Mammary epithelial cell (primary cell): ENCODE measurements at regions of chr1 and their contacts with region 1.

Region 1: DNA sequence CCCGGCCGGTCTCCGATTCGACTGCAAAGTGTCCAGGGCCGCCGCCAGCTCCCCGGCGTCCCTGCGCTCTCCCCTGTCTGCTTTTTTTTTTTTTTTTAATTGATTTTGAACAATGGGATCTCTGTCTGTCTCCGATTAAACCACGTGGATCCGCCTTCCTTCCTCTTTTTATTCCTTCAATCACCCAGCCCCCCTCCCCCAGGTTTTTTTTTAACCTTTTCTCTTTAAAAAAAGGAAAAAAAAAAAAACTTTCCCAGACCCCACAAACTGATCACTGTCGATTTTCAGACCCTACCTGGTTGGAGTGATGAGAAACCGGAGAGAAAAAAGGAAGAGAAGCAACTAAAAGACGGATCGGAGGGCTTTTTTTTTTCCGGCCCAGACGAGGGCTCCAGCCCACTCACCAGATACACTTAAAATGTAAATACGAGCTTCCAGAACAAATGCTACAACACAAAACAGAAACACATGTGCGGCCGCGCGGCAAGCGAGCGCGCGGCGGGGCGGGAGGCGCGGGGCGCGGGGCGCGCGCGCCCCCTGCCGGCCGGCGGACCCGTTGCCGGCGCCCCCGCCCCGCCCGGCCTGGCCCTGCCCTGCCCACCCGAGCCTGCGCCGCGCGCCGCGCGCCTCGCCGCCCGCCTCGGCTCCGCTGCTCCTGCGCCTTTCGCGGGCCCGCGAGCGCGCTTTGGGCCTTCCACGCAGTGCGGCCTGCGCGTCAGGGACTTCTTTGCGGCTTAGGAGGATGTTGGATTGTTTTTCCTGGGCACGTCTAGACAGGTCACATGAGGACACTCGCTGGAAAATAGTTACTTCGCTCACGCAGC is at the start of gene RCC2:
- DNase-seq: peak; percentile 72
- H3K4me3 ChIP-seq: peak within 1 kb of the TSS; percentile 76 to 99 (median 86)
- H3K27ac ChIP-seq: peak within 1 kb of the TSS; percentile 95
- H3K4me1 ChIP-seq: peaks cover 56% of the 10 kb centered on the region
- H3K27me3 ChIP-seq: no peaks in the 10 kb centered on the region
- CTCF ChIP-seq: no peak
- total RNA-seq, gene RCC2: 97.9 to 113 TPM

Region 2: GRCh38 chr1:17427696-17428660 is 11.5 kb before region 1 on chr1:
- CTCF ChIA-PET with region 1: no interaction called
- dilution Hi-C with region 1: no loop called
- in situ Hi-C with region 1: no loop called
- intact Hi-C with region 1: loop called (anchors 1 kb)
- DNase-seq: no peak
- H3K4me3 ChIP-seq: no peak overlapping the region
- H3K27ac ChIP-seq: no peak overlapping the region
- H3K4me1 ChIP-seq: no peaks in the 10 kb centered on the region
- H3K27me3 ChIP-seq: no peaks in the 10 kb centered on the region
- CTCF ChIP-seq: no peak

Region 3: GRCh38 chr1:17460245-17460644 is 20.8 kb after region 1 on chr1:
- CTCF ChIA-PET with region 1: interaction called, 4 read pairs
- dilution Hi-C with region 1: no loop called
- in situ Hi-C with region 1: no loop called
- intact Hi-C with region 1: loop called (anchors 1 kb)
- DNase-seq: peak; percentile 98
- H3K4me3 ChIP-seq: peak overlapping the region in 2 of 3 experiments; percentile 28
- H3K27ac ChIP-seq: peak overlapping the region; percentile 86
- H3K4me1 ChIP-seq: peaks cover 5% of the 10 kb centered on the region
- H3K27me3 ChIP-seq: no peaks in the 10 kb centered on the region
- CTCF ChIP-seq: peak in 1 of 2 donors; percentile 2

Region 4: GRCh38 chr1:17475729-17476128 is 36.3 kb after region 1 on chr1:
- CTCF ChIA-PET with region 1: interaction called, 4 read pairs
- dilution Hi-C with region 1: no loop called
- in situ Hi-C with region 1: loop called in 1 of 2 experiments (anchors 5 kb)
- intact Hi-C with region 1: loop called (anchors 1 kb)
- DNase-seq: peak; percentile 92
- H3K4me3 ChIP-seq: no peak overlapping the region
- H3K27ac ChIP-seq: no peak overlapping the region
- H3K4me1 ChIP-seq: peaks cover 8% of the 10 kb centered on the region
- H3K27me3 ChIP-seq: no peaks in the 10 kb centered on the region
- CTCF ChIP-seq: no peak

Region 5: DNA sequence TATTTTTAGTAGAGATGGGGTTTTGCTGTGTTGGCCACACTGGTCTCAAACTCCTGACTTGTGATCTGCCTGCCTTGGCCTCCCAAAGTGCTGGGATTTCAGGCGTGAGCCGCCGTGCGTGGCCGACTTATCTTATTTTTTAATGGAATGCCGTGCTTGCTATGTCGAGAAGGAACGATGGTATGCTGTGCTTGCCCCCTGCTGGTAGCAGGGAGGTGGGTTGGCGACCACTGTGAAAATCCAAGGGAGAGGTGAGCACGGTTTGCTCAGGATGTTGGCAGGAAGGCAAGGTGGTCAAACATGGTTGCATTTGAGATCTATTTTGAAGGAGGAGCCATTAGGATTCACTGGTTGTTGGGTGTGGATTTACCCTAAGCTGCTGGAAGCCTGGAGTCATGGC is 45.8 kb after region 1 on chr1:
- CTCF ChIA-PET with region 1: no interaction called
- dilution Hi-C with region 1: no loop called
- in situ Hi-C with region 1: no loop called
- intact Hi-C with region 1: loop called (anchors 2 kb)
- DNase-seq: no peak
- H3K4me3 ChIP-seq: no peak overlapping the region
- H3K27ac ChIP-seq: no peak overlapping the region
- H3K4me1 ChIP-seq: peaks cover 7% of the 10 kb centered on the region
- H3K27me3 ChIP-seq: no peaks in the 10 kb centered on the region
- CTCF ChIP-seq: peak; percentile 40 to 53

Region 6: DNA sequence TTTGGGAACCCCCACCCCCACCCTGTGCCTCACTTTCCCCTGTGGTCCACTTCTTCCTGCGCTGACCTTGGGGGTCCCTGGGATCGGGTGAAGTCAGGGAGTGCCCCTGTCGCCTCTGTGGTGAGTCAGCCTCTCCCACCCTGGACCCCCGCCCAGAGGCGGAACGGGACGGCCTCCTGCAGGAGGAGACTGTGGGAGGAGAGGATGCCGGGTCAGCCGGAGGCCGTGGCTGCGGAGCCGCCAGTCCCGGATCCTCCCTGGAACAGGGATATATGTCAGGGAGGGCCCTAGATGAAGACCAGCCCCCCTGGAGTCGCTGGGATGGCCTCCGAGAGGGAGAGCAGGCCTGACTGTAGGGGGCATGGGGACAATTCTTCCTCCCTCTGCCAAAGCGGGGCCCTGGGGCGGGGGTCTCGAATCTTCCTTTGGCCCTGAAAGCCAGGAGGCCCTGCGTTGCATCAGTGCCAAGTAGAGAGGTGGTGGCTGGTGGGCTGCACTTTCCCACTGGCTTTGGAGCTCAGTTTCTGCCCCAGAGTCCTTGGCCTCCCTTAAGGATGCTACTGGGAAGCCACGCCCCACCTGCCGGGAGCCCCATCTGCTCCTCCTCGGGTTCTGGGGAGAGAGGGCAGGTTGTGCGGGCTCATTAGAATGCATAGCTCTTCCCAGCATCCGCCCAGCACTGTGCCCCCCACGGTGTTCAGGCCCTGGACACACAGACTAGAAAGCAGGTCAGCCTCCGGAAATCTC is 101.0 kb after region 1 on chr1:
- CTCF ChIA-PET with region 1: no interaction called
- dilution Hi-C with region 1: loop called (anchors 5 kb)
- in situ Hi-C with region 1: no loop called
- intact Hi-C with region 1: no loop called
- DNase-seq: no peak
- H3K4me3 ChIP-seq: peak overlapping the region; percentile 49 to 56 (median 51)
- H3K27ac ChIP-seq: no peak overlapping the region
- H3K4me1 ChIP-seq: peaks cover 3% of the 10 kb centered on the region
- H3K27me3 ChIP-seq: peaks cover 9% of the 10 kb centered on the region
- CTCF ChIP-seq: no peak